Activated T-helper 2 cell treated with anti-CD3 and anti-CD28 coated beads, Interferon-gamma antibody, Interleukin-2, Interleukin-4, amounts not matched to agents 10 μg/mL and 5 μg/mL and 100 μg/mL, durations not matched to agents 14 hours and 24 hours and 36 hours (primary cell): ENCODE measurements at regions of chr5 and their contacts with region 1.

Region 1: GRCh38 chr5:172123269-172123692 is 64.7 kb downstream of the STK10 start:
- DNase-seq: no peak
- H3K4me3 Mint-ChIP-seq: no peak overlapping the region
- H3K27ac Mint-ChIP-seq: no peak overlapping the region
- H3K4me1 Mint-ChIP-seq: peaks cover 18% of the 10 kb centered on the region
- H3K27me3 Mint-ChIP-seq: no peaks in the 10 kb centered on the region

Region 2: GRCh38 chr5:172141949-172142319 is 18.7 kb after region 1 on chr5:
- intact Hi-C with region 1: loop called (anchors 1 kb)
- DNase-seq: no peak
- H3K4me3 Mint-ChIP-seq: no peak overlapping the region
- H3K27ac Mint-ChIP-seq: no peak overlapping the region
- H3K4me1 Mint-ChIP-seq: peaks cover 30% of the 10 kb centered on the region
- H3K27me3 Mint-ChIP-seq: no peaks in the 10 kb centered on the region